ENCODE measurements at regions of chr5 and their contacts with region 1.

Region 1: GRCh38 chr5:139765409-139766217 is 30.0 kb upstream of the PSD2 start:
- DNase-seq: peak; percentile 85
- ATAC-seq: peak; percentile 92
- H3K4me3 Mint-ChIP-seq: peak overlapping the region; percentile 67
- H3K27ac Mint-ChIP-seq: no peak overlapping the region
- H3K4me1 Mint-ChIP-seq: peaks cover 4% of the 10 kb centered on the region
- H3K27me3 Mint-ChIP-seq: peaks cover 34% of the 10 kb centered on the region

Region 2: DNA sequence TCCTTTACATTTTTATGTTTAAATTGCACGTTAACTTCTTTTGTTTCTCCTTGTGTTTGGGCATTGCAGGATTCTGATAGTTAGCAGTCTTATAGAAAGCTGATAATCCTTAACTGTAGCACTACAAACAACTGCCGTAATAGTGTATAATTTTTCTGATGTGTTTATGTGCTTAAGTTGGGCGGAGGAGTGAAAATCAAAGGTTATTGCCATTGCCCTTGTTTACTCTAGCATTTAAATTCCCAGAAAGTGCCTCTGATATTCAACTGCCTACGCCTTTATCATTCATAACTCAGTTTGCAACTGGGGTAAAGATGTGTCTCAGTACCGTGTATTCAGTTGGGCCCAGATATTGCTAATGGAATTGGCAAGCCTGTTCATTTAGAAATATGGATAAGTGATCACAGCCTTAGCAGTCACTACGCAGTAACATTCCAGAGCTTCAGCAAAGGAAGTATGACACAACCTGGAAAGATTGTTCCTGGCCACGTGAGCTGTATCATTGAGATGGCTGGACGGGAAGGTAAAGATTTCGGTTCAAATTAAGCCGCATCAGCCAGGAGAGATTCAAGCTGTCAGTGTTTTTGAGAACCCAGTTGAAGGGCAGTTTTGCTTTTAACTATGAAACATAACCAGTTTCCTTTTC is 862.4 kb before region 1 on chr5:
- CTCF ChIA-PET with region 1: no interaction called
- DNase-seq: no peak
- ATAC-seq: no peak
- H3K4me3 Mint-ChIP-seq: no peak overlapping the region
- H3K27ac Mint-ChIP-seq: no peak overlapping the region
- H3K4me1 Mint-ChIP-seq: peaks cover 13% of the 10 kb centered on the region
- H3K27me3 Mint-ChIP-seq: peaks cover 9% of the 10 kb centered on the region

Region 3: DNA sequence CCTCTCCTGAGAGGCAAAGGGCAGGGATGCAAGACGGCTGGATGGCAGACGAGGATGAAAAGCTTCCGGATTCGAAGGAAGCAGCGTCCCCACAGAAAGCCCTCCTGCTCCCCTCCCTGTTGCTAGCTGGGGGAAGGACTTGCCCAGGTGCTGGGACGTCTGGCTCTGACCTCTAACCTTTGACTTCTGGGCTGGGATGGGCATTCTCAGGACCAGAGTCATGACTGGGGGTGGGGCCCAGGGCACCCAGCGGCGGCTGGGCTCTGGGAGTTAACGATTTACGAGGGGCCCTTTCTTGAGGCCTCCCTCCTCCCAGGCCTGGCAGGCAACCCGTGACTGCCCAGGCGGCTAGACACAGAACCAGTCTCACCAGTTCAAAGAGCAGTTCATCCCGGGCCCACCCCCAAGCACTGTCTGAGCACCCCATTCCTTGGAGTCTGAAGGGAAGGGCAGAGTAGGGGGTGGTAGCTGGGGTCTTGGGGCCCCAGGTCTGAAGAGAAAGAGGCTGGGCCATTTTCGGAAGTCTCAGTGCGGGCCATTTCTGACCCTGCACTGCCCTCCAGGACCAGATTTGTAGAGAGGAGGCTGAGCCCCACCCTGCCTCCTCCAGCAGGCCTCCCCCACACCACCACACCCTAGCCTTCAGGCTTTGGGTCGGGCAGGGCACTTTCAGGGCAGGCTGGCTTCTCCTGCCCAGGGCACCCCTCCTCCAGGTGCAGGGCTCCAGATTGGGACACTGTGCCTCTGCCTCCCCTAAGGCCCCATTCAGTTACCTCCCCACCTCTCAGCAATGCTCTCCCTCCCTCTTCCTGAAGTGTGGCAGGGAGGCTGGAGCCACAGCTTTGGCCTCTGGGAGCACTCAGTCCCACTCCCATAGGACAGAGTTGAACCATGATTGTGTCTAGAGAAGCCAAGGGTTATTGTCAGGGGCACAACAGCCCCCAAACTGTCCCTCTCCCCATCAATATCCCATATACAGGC is 122.4 kb before region 1 on chr5:
- CTCF ChIA-PET with region 1: interaction called, 11 read pairs
- DNase-seq: no peak
- ATAC-seq: no peak
- H3K4me3 Mint-ChIP-seq: no peak overlapping the region
- H3K27ac Mint-ChIP-seq: no peak overlapping the region
- H3K4me1 Mint-ChIP-seq: peaks cover 35% of the 10 kb centered on the region
- H3K27me3 Mint-ChIP-seq: peaks cover 29% of the 10 kb centered on the region

Region 4: DNA sequence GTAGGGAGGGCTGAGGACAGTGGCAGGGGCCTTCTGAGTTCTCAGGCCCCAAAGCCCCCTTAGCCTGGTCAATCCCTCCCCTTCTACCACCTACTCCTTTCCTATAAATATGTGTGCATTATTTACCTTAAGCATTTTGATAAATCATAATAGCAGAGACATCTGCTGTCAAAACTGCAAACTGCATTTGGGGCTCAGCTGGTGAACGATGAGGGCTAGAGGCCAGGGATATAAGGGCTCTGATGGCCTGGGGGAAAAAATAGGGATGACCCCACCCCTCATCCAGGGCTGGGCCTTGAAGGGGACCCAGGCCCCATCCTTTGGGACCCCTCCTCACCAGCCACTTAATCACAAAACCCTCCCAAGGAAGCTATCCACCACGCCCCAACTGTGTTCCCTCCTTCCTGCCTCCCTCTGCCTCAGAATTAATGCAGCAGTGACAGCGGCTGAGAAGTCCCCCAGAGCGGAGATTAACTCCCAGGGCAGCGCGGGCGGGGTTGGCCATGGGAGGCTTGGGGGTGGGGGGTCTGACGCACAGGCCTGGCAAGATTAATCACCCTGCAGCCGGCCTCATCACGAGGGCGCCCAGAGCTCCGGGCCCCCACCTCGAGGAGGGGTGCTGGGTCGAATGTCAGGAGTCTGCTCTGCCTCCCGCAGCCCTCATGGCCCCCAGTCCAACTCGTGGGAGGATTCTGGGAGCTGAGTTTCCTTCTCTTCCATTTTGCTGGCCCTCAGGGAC is 75.4 kb before region 1 on chr5:
- CTCF ChIA-PET with region 1: interaction called, 14 read pairs
- DNase-seq: no peak
- ATAC-seq: peak; percentile 64
- H3K4me3 Mint-ChIP-seq: no peak overlapping the region
- H3K27ac Mint-ChIP-seq: no peak overlapping the region
- H3K4me1 Mint-ChIP-seq: no peaks in the 10 kb centered on the region
- H3K27me3 Mint-ChIP-seq: no peaks in the 10 kb centered on the region

Region 5: DNA sequence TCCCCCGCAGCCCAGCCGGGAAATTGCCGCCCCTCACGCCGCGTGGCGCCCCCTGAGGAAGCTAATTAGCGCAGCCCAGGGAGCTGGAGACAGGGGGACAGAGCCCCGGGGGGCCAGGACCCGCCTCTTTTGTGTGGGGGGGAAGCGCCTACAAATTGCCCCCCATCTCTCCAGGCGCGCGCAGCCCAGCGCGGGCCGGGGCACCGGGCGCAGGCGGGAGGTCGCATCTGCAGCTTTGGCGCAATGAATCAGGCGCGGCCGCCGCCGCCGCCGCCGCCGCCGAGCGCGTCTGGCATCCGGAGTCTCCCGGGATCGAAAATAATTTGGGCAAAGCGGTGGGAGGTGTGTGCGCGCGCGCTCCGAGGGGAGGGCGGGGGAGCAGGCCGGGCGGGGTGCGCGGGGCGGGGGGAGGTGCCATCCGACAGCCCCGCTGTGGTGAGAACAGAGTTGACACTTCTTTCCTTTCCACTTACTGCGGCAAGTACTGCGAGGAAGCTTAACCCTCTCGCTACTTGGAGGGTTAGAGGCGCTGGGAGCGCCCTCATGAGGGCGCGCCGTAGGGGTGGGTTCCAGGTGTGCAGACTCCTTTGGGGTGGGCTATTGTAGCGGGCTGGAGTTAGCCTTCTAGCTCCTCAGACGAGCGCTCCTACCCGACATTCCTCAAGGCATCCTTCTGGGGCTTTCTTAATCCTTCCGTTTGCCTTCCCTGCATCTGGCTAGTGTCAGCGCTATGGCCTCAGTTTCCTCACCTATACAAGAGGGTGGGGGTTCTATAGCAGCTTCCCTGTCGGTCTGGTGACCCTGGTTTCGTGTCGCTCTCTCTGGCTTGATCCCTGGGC is 54.3 kb before region 1 on chr5:
- CTCF ChIA-PET with region 1: interaction called, 22 read pairs
- DNase-seq: peak; percentile 63
- ATAC-seq: peak; percentile 79
- H3K4me3 Mint-ChIP-seq: peak overlapping the region; percentile 40
- H3K27ac Mint-ChIP-seq: no peak overlapping the region
- H3K4me1 Mint-ChIP-seq: peaks cover 13% of the 10 kb centered on the region
- H3K27me3 Mint-ChIP-seq: peaks cover 25% of the 10 kb centered on the region

Region 6: DNA sequence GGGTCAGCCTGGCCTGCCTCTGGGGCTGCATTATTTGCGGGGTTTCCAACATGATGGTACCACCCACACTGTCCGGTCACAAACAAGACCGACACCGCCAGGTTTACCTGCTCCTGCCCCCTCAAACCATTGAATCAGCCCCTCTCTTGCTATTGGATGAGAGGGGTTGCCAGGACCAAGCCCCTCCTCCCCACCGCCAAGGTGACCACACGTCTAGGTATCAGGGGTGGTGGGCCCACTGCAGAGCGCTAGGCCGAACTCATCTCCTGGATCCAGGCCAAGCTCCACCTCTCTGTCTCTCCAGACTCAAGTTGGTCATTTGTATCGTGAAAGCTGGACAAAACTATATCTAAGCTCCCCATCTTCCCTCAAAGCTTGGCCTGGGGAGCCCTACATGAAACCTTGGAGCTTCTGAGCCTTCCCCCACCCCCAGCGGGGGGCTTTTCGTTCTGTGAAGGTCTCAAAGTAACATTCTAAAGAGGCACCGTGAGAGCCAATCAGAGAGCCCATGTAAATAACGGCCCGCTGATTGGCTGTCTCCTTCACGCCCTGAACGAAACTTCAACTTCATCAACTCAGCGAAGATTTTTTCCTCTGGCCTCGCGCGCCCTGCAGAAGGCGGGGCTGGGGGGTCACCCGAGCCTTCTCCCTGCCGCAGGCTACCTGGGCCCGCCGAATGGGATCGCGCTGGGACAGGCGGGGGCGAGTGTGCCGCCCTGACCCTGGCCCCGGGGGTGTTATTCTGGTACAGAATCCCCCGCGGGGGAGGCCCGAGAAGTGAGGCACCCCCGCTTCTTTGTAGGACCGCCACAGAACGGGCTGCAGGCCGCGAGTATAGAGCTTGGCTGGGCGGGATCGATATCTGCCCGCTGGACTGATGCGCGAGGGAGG is 19.6 kb before region 1 on chr5:
- CTCF ChIA-PET with region 1: interaction called, 72 read pairs
- DNase-seq: no peak
- ATAC-seq: peak; percentile 43
- H3K4me3 Mint-ChIP-seq: peak overlapping the region; percentile 64
- H3K27ac Mint-ChIP-seq: no peak overlapping the region
- H3K4me1 Mint-ChIP-seq: peaks cover 17% of the 10 kb centered on the region
- H3K27me3 Mint-ChIP-seq: peaks cover 36% of the 10 kb centered on the region

Region 7: GRCh38 chr5:139844472-139845145 is 79.0 kb after region 1 on chr5:
- CTCF ChIA-PET with region 1: interaction called, 10 read pairs
- DNase-seq: peak; percentile 85
- ATAC-seq: peak; percentile 27
- H3K4me3 Mint-ChIP-seq: no peak overlapping the region
- H3K27ac Mint-ChIP-seq: no peak overlapping the region
- H3K4me1 Mint-ChIP-seq: peaks cover 4% of the 10 kb centered on the region
- H3K27me3 Mint-ChIP-seq: peaks cover 51% of the 10 kb centered on the region